ENCODE measurements at regions of chr3 and their contacts with region 1.

Region 1: DNA sequence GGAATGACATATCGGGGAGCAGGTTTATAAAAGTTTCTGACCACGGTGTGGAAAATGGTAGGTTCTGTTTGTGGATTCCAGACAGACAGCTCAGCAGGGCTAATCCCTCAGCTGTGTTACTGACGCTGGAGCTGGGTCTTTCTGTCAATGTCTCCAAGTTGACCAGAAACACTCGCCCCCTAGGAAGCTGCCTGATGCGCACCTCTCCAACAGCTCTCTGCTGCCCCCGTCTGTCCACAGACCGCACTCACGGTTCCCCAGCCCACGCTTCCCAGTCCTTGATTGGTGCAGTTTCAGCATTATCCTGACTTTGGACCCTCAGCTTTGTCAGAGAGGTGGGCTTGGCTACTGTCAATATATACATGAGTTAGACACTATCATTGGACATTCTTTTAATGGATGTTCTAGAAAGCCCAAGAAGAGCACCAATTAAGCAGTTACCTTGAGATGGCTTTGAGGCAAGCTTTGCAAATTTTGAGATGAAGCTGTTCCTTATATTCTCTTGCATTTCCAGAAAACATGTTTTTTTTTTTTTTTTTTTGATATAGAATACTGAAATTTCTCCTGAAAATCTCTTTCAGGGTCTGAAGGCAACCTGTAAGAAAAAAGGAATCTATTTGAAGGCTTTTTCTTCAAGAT is 98.9 kb upstream of the TBC1D5 start:
- DNase-seq: peak; percentile 73
- ATAC-seq: peak; percentile 90 to 93
- H3K4me3 ChIP-seq: no peak overlapping the region
- H3K27ac ChIP-seq: no peak overlapping the region
- H3K4me1 ChIP-seq: peaks cover 4% of the 10 kb centered on the region
- H3K27me3 ChIP-seq: no peaks in the 10 kb centered on the region
- CTCF ChIP-seq: peak; percentile 93

Region 2: GRCh38 chr3:17645072-17645698 is 196.1 kb before region 1 on chr3:
- intact Hi-C with region 1: loop called (anchors 10 kb)
- DNase-seq: no peak
- ATAC-seq: peak; percentile 75 to 84
- H3K4me3 ChIP-seq: no peak overlapping the region
- H3K27ac ChIP-seq: no peak overlapping the region
- H3K4me1 ChIP-seq: peaks cover 19% of the 10 kb centered on the region
- H3K27me3 ChIP-seq: no peaks in the 10 kb centered on the region
- CTCF ChIP-seq: peak; percentile 76

Region 3: GRCh38 chr3:17749281-17749680 is 92.0 kb before region 1 on chr3:
- intact Hi-C with region 1: no loop called
- DNase-seq: no peak
- ATAC-seq: peak in 1 of 2 donors; percentile 28
- H3K4me3 ChIP-seq: no peak overlapping the region
- H3K27ac ChIP-seq: no peak overlapping the region
- H3K4me1 ChIP-seq: peaks cover 4% of the 10 kb centered on the region
- H3K27me3 ChIP-seq: no peaks in the 10 kb centered on the region
- CTCF ChIP-seq: no peak